MCF 10A (cell line): ENCODE measurements at regions of chr17 and their contacts with region 1.

Region 1: DNA sequence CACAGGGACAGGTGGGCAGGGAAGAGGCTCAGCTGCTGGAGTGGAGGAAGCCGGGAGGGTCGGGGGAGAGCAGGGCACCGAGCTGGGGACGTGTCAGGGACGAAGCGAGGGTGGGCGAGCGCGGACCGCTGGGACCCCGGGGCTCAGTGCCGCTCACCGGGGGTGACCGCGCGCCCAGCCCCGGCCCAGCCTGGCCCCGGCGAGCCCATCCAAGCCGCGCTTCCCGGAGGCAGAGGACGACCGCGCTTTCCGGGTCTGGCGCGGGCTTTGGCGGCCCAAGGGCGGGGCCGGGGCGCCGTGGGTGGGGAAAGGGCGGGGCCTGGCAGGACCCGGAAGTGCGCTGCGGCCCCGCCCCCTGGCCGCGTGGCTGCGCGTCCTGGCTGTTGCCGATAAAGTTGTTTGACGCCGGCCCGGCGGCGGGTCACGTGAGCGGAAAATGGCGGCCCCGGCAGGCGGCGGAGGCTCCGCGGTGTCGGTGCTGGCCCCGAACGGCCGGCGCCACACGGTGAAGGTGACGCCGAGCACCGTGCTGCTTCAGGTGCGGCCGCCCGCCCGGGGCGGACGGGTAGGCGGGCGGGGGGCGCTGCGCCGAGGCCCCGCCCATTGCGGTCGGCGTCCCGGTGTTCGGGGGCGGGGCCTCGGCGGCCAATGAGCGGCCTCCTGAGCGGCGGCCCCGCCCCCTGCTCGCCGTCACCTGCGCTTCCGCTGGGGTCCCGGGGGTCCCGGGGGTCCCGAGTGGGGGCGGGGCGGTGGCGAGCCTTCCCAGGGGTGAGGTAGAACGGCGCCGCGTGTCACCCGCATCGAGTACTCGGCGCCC is at the start of gene ASPSCR1:
- DNase-seq: peak; percentile 85
- H3K4me3 Mint-ChIP-seq: peak within 1 kb of the TSS; percentile 97
- H3K27ac Mint-ChIP-seq: peak within 1 kb of the TSS; percentile 88
- H3K4me1 Mint-ChIP-seq: peaks cover 25% of the 10 kb centered on the region
- H3K27me3 Mint-ChIP-seq: no peaks in the 10 kb centered on the region
- CTCF ChIP-seq: no peak
- total RNA-seq, gene ASPSCR1: 24.9 and 29.7 TPM in 2 replicates

Region 2: GRCh38 chr17:82003411-82004381 is 26.3 kb after region 1 on chr17:
- CTCF ChIA-PET with region 1: interaction called, 4 read pairs
- POLR2A ChIA-PET with region 1: interaction called, 16 read pairs
- intact Hi-C with region 1: loop called (anchors 2 kb)
- DNase-seq: peak; percentile 95
- H3K4me3 Mint-ChIP-seq: no peak overlapping the region
- H3K27ac Mint-ChIP-seq: no peak overlapping the region
- H3K4me1 Mint-ChIP-seq: peaks cover 10% of the 10 kb centered on the region
- H3K27me3 Mint-ChIP-seq: no peaks in the 10 kb centered on the region
- CTCF ChIP-seq: no peak